CD8-positive, alpha-beta T cell (primary cell): ENCODE measurements at regions of chr20 and their contacts with region 1.

Region 1: GRCh38 chr20:41028348-41029148 is at the start of gene TOP1:
- DNase-seq: peak; percentile 99 to 100 (median 100)
- ATAC-seq: peak; percentile 97
- H3K4me3 ChIP-seq: peak within 1 kb of the TSS; percentile 72 to 76
- H3K4me3 Mint-ChIP-seq: peak within 1 kb of the TSS; percentile 92
- H3K27ac ChIP-seq: peak within 1 kb of the TSS; percentile 94 to 95
- H3K27ac Mint-ChIP-seq: peak within 1 kb of the TSS; percentile 99
- H3K4me1 ChIP-seq: peaks cover 45% of the 10 kb centered on the region
- H3K4me1 Mint-ChIP-seq: peaks cover 46% of the 10 kb centered on the region
- H3K27me3 ChIP-seq: no peaks in the 10 kb centered on the region
- H3K27me3 Mint-ChIP-seq: no peaks in the 10 kb centered on the region
- CTCF ChIP-seq: no peak
- total RNA-seq, gene TOP1: 58.5 to 61.1 TPM

Region 2: GRCh38 chr20:41003143-41003883 is 25.2 kb before region 1 on chr20:
- CTCF ChIA-PET with region 1: no interaction called
- POLR2A ChIA-PET with region 1: no interaction called
- intact Hi-C with region 1: loop called (anchors 1 kb)
- DNase-seq: peak; percentile 24 to 86 (median 60)
- ATAC-seq: peak; percentile 89
- H3K4me3 ChIP-seq: peak overlapping the region; percentile 26 to 40
- H3K4me3 Mint-ChIP-seq: peak overlapping the region; percentile 76
- H3K27ac ChIP-seq: peak overlapping the region; percentile 58 to 86
- H3K27ac Mint-ChIP-seq: peak overlapping the region; percentile 92
- H3K4me1 ChIP-seq: peaks cover 14% of the 10 kb centered on the region
- H3K4me1 Mint-ChIP-seq: peaks cover 21% of the 10 kb centered on the region
- H3K27me3 ChIP-seq: no peaks in the 10 kb centered on the region
- H3K27me3 Mint-ChIP-seq: no peaks in the 10 kb centered on the region
- CTCF ChIP-seq: no peak

Region 3: DNA sequence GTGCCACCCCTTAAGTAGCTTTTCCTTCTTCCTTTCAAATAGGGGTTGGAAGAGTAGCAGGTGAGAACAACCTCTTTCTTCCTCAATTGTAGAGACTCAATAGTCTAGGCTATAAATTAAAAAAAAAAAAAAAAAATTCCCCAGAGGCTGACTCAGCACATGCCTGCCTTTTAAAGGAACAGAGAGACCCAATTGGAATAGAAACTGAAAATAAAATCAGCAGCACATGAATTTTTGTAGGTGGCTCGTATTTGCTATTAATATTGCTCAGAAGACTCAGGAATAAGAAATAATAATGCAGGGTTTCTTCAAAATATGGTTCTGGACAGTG is 19.4 kb after region 1 on chr20:
- CTCF ChIA-PET with region 1: interaction called, 9 read pairs
- POLR2A ChIA-PET with region 1: interaction called, 4 read pairs
- intact Hi-C with region 1: loop called (anchors 1 kb)
- DNase-seq: peak in 2 of 9 experiments; percentile 48 to 69
- ATAC-seq: peak; percentile 63
- H3K4me3 ChIP-seq: peak overlapping the region; percentile 34 to 41
- H3K4me3 Mint-ChIP-seq: peak overlapping the region; percentile 79
- H3K27ac ChIP-seq: peak overlapping the region; percentile 9 to 68
- H3K27ac Mint-ChIP-seq: peak overlapping the region; percentile 81
- H3K4me1 ChIP-seq: peaks cover 77% of the 10 kb centered on the region
- H3K4me1 Mint-ChIP-seq: peaks cover 91% of the 10 kb centered on the region
- H3K27me3 ChIP-seq: no peaks in the 10 kb centered on the region
- H3K27me3 Mint-ChIP-seq: no peaks in the 10 kb centered on the region
- CTCF ChIP-seq: no peak

Region 4: GRCh38 chr20:41161886-41162285 is 133.3 kb after region 1 on chr20:
- CTCF ChIA-PET with region 1: no interaction called
- POLR2A ChIA-PET with region 1: interaction called, 4 read pairs
- intact Hi-C with region 1: loop called in 1 of 2 experiments (anchors 1 kb)
- DNase-seq: peak in 3 of 9 experiments; percentile 25 to 49 (median 45)
- ATAC-seq: no peak
- H3K4me3 ChIP-seq: no peak overlapping the region
- H3K4me3 Mint-ChIP-seq: peak overlapping the region; percentile 58
- H3K27ac ChIP-seq: peak overlapping the region; percentile 39 to 82
- H3K27ac Mint-ChIP-seq: peak overlapping the region; percentile 92
- H3K4me1 ChIP-seq: peaks cover 88% of the 10 kb centered on the region
- H3K4me1 Mint-ChIP-seq: peaks cover 86% of the 10 kb centered on the region
- H3K27me3 ChIP-seq: no peaks in the 10 kb centered on the region
- H3K27me3 Mint-ChIP-seq: no peaks in the 10 kb centered on the region
- CTCF ChIP-seq: no peak

Region 5: GRCh38 chr20:41617931-41618806 is 589.6 kb after region 1 on chr20 and contains the start of gene CHD6:
- CTCF ChIA-PET with region 1: no interaction called
- POLR2A ChIA-PET with region 1: no interaction called
- intact Hi-C with region 1: loop called in 1 of 2 experiments (anchors 1 kb)
- DNase-seq: peak; percentile 97 to 100 (median 99)
- ATAC-seq: peak; percentile 92
- H3K4me3 ChIP-seq: peak within 1 kb of the TSS; percentile 65 to 67
- H3K4me3 Mint-ChIP-seq: peak within 1 kb of the TSS; percentile 92
- H3K27ac ChIP-seq: peak within 1 kb of the TSS; percentile 60 to 68
- H3K27ac Mint-ChIP-seq: peak within 1 kb of the TSS; percentile 91
- H3K4me1 ChIP-seq: peaks cover 23% of the 10 kb centered on the region
- H3K4me1 Mint-ChIP-seq: peaks cover 47% of the 10 kb centered on the region
- H3K27me3 ChIP-seq: no peaks in the 10 kb centered on the region
- H3K27me3 Mint-ChIP-seq: no peaks in the 10 kb centered on the region
- CTCF ChIP-seq: no peak
- total RNA-seq, gene CHD6: 113 to 122 TPM